CD8-positive, alpha-beta T cell (primary cell): ENCODE measurements at regions of chr7 and their contacts with region 1.

Region 1: GRCh38 chr7:28329661-28330363 is 82.5 kb upstream of the CREB5 start:
- DNase-seq: peak in 6 of 9 experiments; percentile 5 to 65 (median 32)
- ATAC-seq: peak; percentile 55
- H3K4me3 ChIP-seq: peak overlapping the region; percentile 13 to 18
- H3K4me3 Mint-ChIP-seq: peak overlapping the region; percentile 80
- H3K27ac ChIP-seq: peak overlapping the region in 1 of 2 experiments; percentile 30
- H3K27ac Mint-ChIP-seq: peak overlapping the region; percentile 86
- H3K4me1 ChIP-seq: peaks cover 34% of the 10 kb centered on the region
- H3K4me1 Mint-ChIP-seq: peaks cover 40% of the 10 kb centered on the region
- H3K27me3 ChIP-seq: no peaks in the 10 kb centered on the region
- H3K27me3 Mint-ChIP-seq: no peaks in the 10 kb centered on the region
- CTCF ChIP-seq: no peak

Region 2: GRCh38 chr7:28364082-28364481 is 34.3 kb after region 1 on chr7:
- CTCF ChIA-PET with region 1: interaction called, 3 read pairs
- POLR2A ChIA-PET with region 1: no interaction called
- intact Hi-C with region 1: loop called in 1 of 2 experiments (anchors 2 kb)
- DNase-seq: no peak
- ATAC-seq: no peak
- H3K4me3 ChIP-seq: no peak overlapping the region
- H3K4me3 Mint-ChIP-seq: no peak overlapping the region
- H3K27ac ChIP-seq: no peak overlapping the region
- H3K27ac Mint-ChIP-seq: no peak overlapping the region
- H3K4me1 ChIP-seq: no peaks in the 10 kb centered on the region
- H3K4me1 Mint-ChIP-seq: peaks cover 2% of the 10 kb centered on the region
- H3K27me3 ChIP-seq: no peaks in the 10 kb centered on the region
- H3K27me3 Mint-ChIP-seq: peaks cover 2% of the 10 kb centered on the region
- CTCF ChIP-seq: no peak

Region 3: GRCh38 chr7:28685644-28686417 is 356.0 kb after region 1 on chr7:
- CTCF ChIA-PET with region 1: no interaction called
- POLR2A ChIA-PET with region 1: no interaction called
- intact Hi-C with region 1: no loop called
- DNase-seq: peak in 3 of 9 experiments; percentile 21 to 70 (median 40)
- ATAC-seq: peak; percentile 54
- H3K4me3 ChIP-seq: peak overlapping the region in 1 of 2 experiments; percentile 35
- H3K4me3 Mint-ChIP-seq: no peak overlapping the region
- H3K27ac ChIP-seq: no peak overlapping the region
- H3K27ac Mint-ChIP-seq: no peak overlapping the region
- H3K4me1 ChIP-seq: peaks cover 18% of the 10 kb centered on the region
- H3K4me1 Mint-ChIP-seq: peaks cover 3% of the 10 kb centered on the region
- H3K27me3 ChIP-seq: peaks cover 0 to 4% of the 10 kb centered on the region in 2 experiments
- H3K27me3 Mint-ChIP-seq: peaks cover 9% of the 10 kb centered on the region
- CTCF ChIP-seq: no peak